Ovary (tissue), 10 donors: ENCODE measurements at regions of chr7 and their contacts with region 1.

Region 1: DNA sequence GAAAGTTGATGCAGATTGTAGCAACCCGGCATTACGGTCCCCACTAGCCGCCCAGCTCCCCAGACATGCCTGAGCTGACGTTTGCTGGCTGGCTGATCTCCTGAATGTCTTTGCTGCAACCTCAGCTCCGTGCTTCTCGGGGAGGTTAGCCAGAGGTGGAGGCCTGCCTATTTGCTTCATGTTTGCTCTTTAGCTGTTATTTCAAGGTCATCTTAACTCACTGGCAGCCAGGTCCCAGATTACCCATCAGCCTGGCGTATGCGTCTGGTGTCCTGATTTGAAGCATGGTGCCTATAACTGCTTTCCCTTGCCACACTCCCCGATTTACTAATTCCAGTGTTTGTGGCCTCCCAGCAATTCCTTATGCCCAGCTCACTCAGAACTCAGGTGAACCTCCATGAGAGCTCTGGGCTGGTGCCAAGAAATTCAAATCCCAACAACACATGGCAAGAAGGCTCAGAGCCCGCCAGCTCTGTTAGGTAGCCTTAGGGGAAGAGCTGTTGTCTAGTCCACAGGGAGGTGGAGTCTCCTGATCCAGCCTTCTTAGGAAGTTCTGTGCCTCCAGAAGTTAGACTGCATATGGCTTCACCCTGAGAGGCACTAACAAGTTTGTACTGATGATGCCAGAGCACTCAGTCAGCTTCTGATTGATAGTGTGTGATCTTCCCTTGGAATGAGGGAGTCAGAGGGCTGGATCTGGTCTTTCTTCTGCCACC is 69.7 kb upstream of the EXOC4 start:
- DNase-seq: no peak
- H3K4me3 ChIP-seq: no peak overlapping the region
- H3K27ac ChIP-seq: no peak overlapping the region
- H3K4me1 ChIP-seq: no peaks in the 10 kb centered on the region
- H3K27me3 ChIP-seq: no peaks in the 10 kb centered on the region
- CTCF ChIP-seq: no peak
- EP300 ChIP-seq: no peak
- POLR2A ChIP-seq: no peak

Region 2: GRCh38 chr7:133815611-133816210 is 632.5 kb after region 1 on chr7:
- intact Hi-C with region 1: loop called in 1 of 4 experiments (anchors 10 kb)
- DNase-seq: no peak
- H3K4me3 ChIP-seq: no peak overlapping the region
- H3K27ac ChIP-seq: no peak overlapping the region
- H3K4me1 ChIP-seq: no peaks in the 10 kb centered on the region
- H3K27me3 ChIP-seq: no peaks in the 10 kb centered on the region
- CTCF ChIP-seq: no peak
- EP300 ChIP-seq: no peak
- POLR2A ChIP-seq: no peak